HEK293 (cell line): ENCODE measurements at regions of chr18 and their contacts with region 1.

Region 1: GRCh38 chr18:59996370-59996966 is 96.7 kb downstream of the PMAIP1 start:
- H3K4me3 ChIP-seq: no peak overlapping the region
- H3K27ac ChIP-seq: no peak overlapping the region
- H3K4me1 ChIP-seq: no peaks in the 10 kb centered on the region
- CTCF ChIP-seq: no peak

Region 2: GRCh38 chr18:59783138-59783537 is 213.3 kb before region 1 on chr18:
- CTCF ChIA-PET with region 1: interaction called, 14 read pairs
- POLR2A ChIA-PET with region 1: no interaction called
- H3K4me3 ChIP-seq: no peak overlapping the region
- H3K27ac ChIP-seq: no peak overlapping the region
- H3K4me1 ChIP-seq: no peaks in the 10 kb centered on the region
- CTCF ChIP-seq: peak; percentile 74

Region 3: GRCh38 chr18:59899298-59900221 is 96.9 kb before region 1 on chr18 and contains the start of gene PMAIP1:
- CTCF ChIA-PET with region 1: interaction called, 6 read pairs
- POLR2A ChIA-PET with region 1: interaction called, 54 read pairs
- H3K4me3 ChIP-seq: peak within 1 kb of the TSS; percentile 61
- H3K27ac ChIP-seq: peak within 1 kb of the TSS; percentile 96
- H3K4me1 ChIP-seq: peaks cover 21% of the 10 kb centered on the region
- CTCF ChIP-seq: no peak

Region 4: GRCh38 chr18:59980188-59980637 is 16.3 kb before region 1 on chr18:
- CTCF ChIA-PET with region 1: interaction called, 17 read pairs
- POLR2A ChIA-PET with region 1: no interaction called
- H3K4me3 ChIP-seq: no peak overlapping the region
- H3K27ac ChIP-seq: no peak overlapping the region
- H3K4me1 ChIP-seq: no peaks in the 10 kb centered on the region
- CTCF ChIP-seq: no peak

Region 5: DNA sequence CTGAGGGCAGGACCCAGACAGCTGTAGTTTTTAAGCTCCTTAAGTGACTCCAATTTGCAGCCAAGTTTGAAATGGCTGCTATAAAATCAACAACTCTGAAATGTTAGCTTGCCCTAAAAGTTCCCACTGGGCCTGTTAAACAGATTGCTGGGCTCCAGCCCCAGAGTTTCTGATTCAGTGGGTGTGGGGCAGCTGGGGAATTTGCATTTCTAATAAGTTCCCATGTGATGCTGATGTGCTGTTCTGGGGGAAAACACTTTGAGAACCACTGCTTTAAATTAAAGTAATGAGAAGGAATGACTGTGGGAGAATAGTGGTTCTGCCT is 24.1 kb after region 1 on chr18:
- CTCF ChIA-PET with region 1: interaction called, 13 read pairs
- POLR2A ChIA-PET with region 1: no interaction called
- H3K4me3 ChIP-seq: no peak overlapping the region
- H3K27ac ChIP-seq: no peak overlapping the region
- H3K4me1 ChIP-seq: peaks cover 9% of the 10 kb centered on the region; the same call in 1 of the 2 replicates
- CTCF ChIP-seq: no peak

Region 6: DNA sequence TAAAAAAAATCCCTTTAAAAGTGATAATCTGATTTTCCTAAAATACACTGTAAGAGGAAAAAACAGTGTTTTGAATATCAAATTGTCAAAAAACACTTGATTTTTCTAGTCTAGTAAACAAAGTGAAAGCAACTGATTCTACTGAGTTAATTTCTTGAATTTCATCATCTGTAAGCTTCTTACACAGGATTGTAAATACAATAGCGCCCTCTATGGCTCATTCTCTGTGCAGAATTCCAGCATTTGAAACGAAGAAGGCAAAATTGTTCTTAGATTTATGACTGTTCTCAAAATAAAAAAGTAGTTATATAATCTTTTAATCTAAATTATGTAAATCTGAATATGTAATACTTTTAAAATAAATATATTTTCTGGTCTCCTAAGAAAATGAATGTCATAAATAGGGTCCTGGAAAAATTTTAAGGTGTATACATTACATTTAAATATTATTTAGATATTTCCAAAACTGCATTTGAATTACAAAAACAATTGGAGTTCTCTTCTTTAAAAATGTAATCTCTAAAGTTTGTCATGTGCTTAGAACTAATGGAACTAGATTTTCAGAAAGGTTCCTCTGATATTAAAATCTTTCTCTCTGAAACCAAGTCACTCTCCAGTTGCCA is 553.0 kb after region 1 on chr18:
- CTCF ChIA-PET with region 1: interaction called, 48 read pairs
- POLR2A ChIA-PET with region 1: no interaction called
- H3K4me3 ChIP-seq: no peak overlapping the region
- H3K27ac ChIP-seq: no peak overlapping the region
- H3K4me1 ChIP-seq: no peaks in the 10 kb centered on the region
- CTCF ChIP-seq: no peak